K562 (cell line): ENCODE measurements at regions of chr17 and their contacts with region 1.

Region 1: GRCh38 chr17:75131280-75132017 is at the start of gene NT5C:
- DNase-seq: peak; percentile 86 to 92 (median 88)
- ATAC-seq: peak; percentile 90
- H3K4me3 ChIP-seq: peak within 1 kb of the TSS; percentile 90
- H3K27ac ChIP-seq: peak within 1 kb of the TSS; percentile 90
- H3K4me1 ChIP-seq: peaks cover 12 to 36% of the 10 kb centered on the region in 2 experiments; a peak in 4 of 5 replicates
- H3K27me3 ChIP-seq: no peaks in the 10 kb centered on the region
- CTCF ChIP-seq: peak; percentile 75 to 86 (median 77)
- EP300 ChIP-seq: no peak
- POLR2A ChIP-seq: peak; percentile 83
- RAD21 ChIP-seq: peak; percentile 70 to 72
- polyA plus RNA-seq, gene NT5C: 2.9 to 5.0 TPM

Region 2: GRCh38 chr17:74864866-74865395 is 266.5 kb before region 1 on chr17:
- CTCF ChIA-PET with region 1: no interaction called
- POLR2A ChIA-PET with region 1: no interaction called
- in situ Hi-C with region 1: no loop called
- intact Hi-C with region 1: no loop called
- DNase-seq: peak; percentile 57 to 83 (median 70)
- ATAC-seq: peak; percentile 74
- H3K4me3 ChIP-seq: no peak overlapping the region
- H3K27ac ChIP-seq: 0 out of 3 replicates have a peak overlapping the region, but pooled peaks have one; percentile 31
- H3K4me1 ChIP-seq: peaks cover 40 to 85% of the 10 kb centered on the region in 2 experiments
- H3K27me3 ChIP-seq: no peaks in the 10 kb centered on the region
- CTCF ChIP-seq: peak; percentile 90 to 98 (median 90)
- EP300 ChIP-seq: no peak
- POLR2A ChIP-seq: no peak
- RAD21 ChIP-seq: peak; percentile 71 to 85

Region 3: DNA sequence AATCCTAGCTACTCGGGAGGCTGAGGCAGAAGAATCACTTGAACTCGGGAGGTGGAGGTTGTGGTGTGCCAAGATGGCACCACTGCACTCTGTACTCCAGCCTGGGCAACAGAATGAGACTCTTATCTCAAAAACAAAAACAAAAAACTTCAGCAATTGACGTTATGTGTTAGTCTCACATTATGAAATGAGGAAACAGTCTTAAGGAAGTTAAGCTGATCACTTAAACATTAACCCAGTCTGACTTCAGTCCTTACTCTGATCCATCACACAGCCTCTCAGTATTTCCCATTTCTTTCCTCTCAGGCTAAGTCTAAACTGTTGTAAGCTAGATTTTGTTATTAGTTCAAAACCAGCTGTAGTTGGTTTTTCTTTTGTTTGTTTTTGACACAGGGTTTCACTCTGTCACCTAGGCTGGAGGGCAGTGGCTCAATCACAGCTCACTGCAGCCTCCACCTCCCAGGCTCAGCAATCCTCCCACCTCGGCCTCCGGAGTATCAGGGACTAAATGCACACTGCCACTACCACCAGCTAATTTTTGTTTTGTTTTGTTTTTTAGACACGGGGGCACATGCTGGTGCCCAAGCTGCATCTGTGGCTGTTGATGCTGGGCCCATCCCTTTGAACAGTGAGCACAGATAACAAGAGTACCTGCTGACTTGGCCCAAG is 16.6 kb after region 1 on chr17:
- CTCF ChIA-PET with region 1: interaction called, 3 read pairs
- POLR2A ChIA-PET with region 1: interaction called, 51 read pairs
- in situ Hi-C with region 1: no loop called
- intact Hi-C with region 1: no loop called
- DNase-seq: no peak
- ATAC-seq: no peak
- H3K4me3 ChIP-seq: no peak overlapping the region
- H3K27ac ChIP-seq: no peak overlapping the region
- H3K4me1 ChIP-seq: peaks cover 5 to 12% of the 10 kb centered on the region in 2 experiments; a peak in 4 of 5 replicates
- H3K27me3 ChIP-seq: no peaks in the 10 kb centered on the region
- CTCF ChIP-seq: no peak
- EP300 ChIP-seq: no peak
- POLR2A ChIP-seq: no peak
- RAD21 ChIP-seq: no peak

Region 4: GRCh38 chr17:76000016-76000754 is 868.7 kb after region 1 on chr17:
- CTCF ChIA-PET with region 1: no interaction called
- POLR2A ChIA-PET with region 1: no interaction called
- in situ Hi-C with region 1: no loop called
- intact Hi-C with region 1: no loop called
- DNase-seq: peak; percentile 80 to 92 (median 90)
- ATAC-seq: peak; percentile 98
- H3K4me3 ChIP-seq: no peak overlapping the region
- H3K27ac ChIP-seq: no peak overlapping the region
- H3K4me1 ChIP-seq: peaks cover 2 to 19% of the 10 kb centered on the region in 2 experiments; a peak in 4 of 5 replicates
- H3K27me3 ChIP-seq: no peaks in the 10 kb centered on the region
- CTCF ChIP-seq: peak; percentile 82 to 98 (median 92)
- EP300 ChIP-seq: no peak; the same call in 1 of the 2 replicates
- POLR2A ChIP-seq: no peak
- RAD21 ChIP-seq: peak; percentile 27 to 68; a peak in 3 of 4 replicates